AG04449 (cell line): ENCODE measurements at regions of chr6 and their contacts with region 1.

Region 1: DNA sequence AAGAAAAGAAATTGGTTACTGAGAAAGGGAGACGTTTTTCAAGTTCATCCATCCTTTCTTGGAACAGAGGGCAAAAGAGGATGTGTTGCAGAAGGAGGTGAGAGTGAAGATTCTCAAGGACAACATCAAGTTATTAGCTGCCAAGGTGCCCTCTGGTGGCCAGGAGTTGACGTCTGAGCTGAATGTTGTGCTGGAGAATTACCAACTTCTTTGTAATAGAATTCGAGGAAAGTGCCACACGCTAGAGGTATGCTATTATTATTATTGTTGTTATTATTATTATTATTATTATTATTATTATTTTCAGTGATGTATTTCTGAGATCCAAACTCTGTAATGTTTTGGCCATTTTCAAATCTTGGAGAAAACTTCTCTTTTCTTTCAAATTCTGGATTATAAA is 197.0 kb downstream of the UTRN start:
- DNase-seq: peak; percentile 31
- H3K4me3 ChIP-seq: no peak overlapping the region
- CTCF ChIP-seq: peak; percentile 79

Region 2: GRCh38 chr6:144098993-144099392 is 383.1 kb before region 1 on chr6:
- CTCF ChIA-PET with region 1: interaction called, 12 read pairs
- POLR2A ChIA-PET with region 1: no interaction called
- DNase-seq: no peak
- H3K4me3 ChIP-seq: no peak overlapping the region
- CTCF ChIP-seq: no peak

Region 3: DNA sequence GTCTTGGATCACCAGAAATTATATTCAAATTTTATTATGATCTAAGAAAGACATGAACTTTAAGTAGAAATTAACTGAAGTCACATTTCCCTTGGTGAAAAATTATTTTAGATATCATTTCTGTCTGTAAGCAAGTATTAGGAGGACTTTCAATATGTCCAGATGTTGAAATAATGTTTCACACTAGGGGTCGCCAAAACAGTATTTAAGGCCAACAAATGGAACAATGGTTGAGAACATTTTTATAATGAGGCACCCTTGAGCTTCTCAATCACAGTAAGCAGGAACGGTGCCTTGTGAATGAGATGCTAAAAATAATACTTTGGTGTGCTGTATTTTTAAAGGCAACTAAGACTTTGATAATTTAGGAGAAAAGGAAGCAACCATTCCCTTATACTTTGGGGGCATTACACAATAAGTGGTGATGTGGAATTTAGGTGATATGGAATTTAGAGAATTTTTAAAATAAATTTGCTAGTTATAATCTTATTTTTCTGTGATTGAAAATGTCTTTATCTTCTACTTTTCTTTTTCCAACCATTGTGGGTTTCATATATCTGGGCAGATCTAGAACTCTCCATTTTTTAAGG is 377.1 kb before region 1 on chr6:
- CTCF ChIA-PET with region 1: interaction called, 44 read pairs
- POLR2A ChIA-PET with region 1: no interaction called
- DNase-seq: peak; percentile 36
- H3K4me3 ChIP-seq: no peak overlapping the region
- CTCF ChIP-seq: peak; percentile 51

Region 4: GRCh38 chr6:144215932-144216667 is 266.0 kb before region 1 on chr6:
- CTCF ChIA-PET with region 1: interaction called, 21 read pairs
- POLR2A ChIA-PET with region 1: interaction called, 3 read pairs
- DNase-seq: peak; percentile 91
- H3K4me3 ChIP-seq: peak overlapping the region; percentile 66
- CTCF ChIP-seq: peak; percentile 84

Region 5: DNA sequence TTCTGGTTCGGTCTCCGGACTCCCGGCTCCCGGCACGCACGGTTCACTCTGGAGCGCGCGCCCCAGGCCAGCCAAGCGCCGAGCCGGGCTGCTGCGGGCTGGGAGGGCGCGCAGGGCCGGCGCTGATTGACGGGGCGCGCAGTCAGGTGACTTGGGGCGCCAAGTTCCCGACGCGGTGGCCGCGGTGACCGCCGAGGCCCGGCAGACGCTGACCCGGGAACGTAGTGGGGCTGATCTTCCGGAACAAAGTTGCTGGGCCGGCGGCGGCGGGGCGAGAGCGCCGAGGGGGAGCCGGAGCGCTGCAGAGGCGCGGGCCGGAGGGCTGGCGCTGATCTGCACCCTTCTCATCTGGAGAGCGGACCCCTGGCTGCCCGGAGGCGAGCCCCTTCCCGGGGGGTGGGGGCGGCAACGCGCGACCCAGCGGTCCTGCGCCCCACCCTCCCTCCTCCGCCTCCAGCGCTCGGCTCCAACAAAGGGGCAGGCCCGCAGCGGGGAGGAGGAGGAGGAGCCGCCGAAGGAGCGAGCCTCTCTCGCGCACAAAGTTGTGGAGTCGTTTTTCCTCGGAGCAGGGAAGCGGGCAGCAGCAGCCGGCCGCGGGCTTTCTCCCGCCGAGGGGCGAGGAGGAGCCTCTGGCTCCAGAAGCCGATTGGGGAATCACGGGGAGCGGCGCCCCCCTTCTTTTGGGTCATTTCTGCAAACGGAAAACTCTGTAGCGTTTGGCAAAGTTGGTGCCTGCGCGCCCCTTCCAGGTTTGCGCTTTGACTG is 197.2 kb before region 1 on chr6 and contains the start of gene UTRN:
- CTCF ChIA-PET with region 1: interaction called, 12 read pairs
- POLR2A ChIA-PET with region 1: no interaction called
- DNase-seq: no peak
- H3K4me3 ChIP-seq: peak within 1 kb of the TSS; percentile 86
- CTCF ChIP-seq: no peak

Region 6: GRCh38 chr6:144449911-144450597 is 32.1 kb before region 1 on chr6:
- CTCF ChIA-PET with region 1: no interaction called
- POLR2A ChIA-PET with region 1: no interaction called
- DNase-seq: no peak
- H3K4me3 ChIP-seq: no peak overlapping the region
- CTCF ChIP-seq: no peak

Region 7: DNA sequence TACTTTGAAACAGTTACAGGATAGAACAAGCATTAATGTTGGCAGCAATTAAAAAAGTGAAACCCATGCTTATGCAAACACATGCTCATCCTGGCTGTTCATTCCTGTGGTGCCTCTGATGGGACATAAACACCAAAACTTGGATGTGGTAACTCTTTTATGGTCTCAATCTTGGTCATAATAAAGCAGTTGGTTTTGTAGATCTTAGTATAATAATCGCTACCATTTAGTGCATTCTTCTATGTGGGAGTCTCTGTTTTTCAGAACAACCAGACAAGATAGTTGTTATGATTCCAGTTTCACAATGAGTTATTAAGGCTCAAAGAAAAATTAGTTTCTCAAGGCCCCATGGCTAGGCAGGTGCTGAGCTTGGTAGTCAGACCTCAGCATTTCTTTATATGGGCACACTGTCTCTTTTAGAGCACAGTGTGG is 13.0 kb before region 1 on chr6:
- CTCF ChIA-PET with region 1: interaction called, 16 read pairs
- POLR2A ChIA-PET with region 1: no interaction called
- DNase-seq: peak; percentile 46
- H3K4me3 ChIP-seq: no peak overlapping the region
- CTCF ChIP-seq: no peak

Region 8: GRCh38 chr6:144493035-144493910 is 11.1 kb after region 1 on chr6:
- CTCF ChIA-PET with region 1: interaction called, 21 read pairs
- POLR2A ChIA-PET with region 1: no interaction called
- DNase-seq: no peak
- H3K4me3 ChIP-seq: no peak overlapping the region
- CTCF ChIP-seq: no peak

Region 9: DNA sequence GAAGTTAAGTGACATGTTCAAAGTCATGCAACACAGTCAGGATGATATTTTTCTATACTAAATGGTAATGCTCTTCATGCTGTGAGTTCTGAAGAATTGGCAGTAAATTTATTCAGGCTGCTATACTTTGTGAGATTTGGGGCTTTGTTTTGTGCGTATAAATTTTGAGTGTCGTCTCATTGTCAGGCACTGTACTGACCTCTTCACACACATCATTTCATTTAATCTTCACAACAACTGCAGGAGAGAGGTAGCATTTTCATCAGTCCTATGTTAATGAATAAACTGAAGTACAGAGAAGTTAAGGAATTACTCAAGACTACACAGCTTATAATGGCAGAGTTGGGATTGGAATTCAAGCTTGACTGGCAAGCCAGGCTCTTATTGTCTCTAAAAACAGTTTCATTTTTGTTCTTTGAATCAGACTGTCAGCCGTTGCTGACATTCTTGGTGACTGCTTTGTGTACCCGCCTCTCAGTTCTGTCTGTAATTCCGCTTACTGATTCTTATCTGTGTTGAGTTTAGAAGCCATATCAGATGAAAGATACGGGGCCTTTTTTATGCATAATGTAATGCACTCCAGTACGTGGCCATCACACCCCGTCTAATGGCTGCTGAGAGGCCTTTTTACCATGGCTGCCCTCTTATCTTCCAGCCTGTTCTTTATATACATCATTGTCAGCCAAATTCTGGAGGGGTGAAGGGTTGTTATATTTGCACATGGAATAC is 77.9 kb after region 1 on chr6:
- CTCF ChIA-PET with region 1: no interaction called
- POLR2A ChIA-PET with region 1: no interaction called
- DNase-seq: no peak
- H3K4me3 ChIP-seq: no peak overlapping the region
- CTCF ChIP-seq: no peak

Region 10: GRCh38 chr6:145036848-145037567 is 554.9 kb after region 1 on chr6:
- CTCF ChIA-PET with region 1: no interaction called
- POLR2A ChIA-PET with region 1: no interaction called
- DNase-seq: no peak
- H3K4me3 ChIP-seq: no peak overlapping the region
- CTCF ChIP-seq: no peak